ENCODE measurements at regions of chr10 and their contacts with region 1.

Region 1: DNA sequence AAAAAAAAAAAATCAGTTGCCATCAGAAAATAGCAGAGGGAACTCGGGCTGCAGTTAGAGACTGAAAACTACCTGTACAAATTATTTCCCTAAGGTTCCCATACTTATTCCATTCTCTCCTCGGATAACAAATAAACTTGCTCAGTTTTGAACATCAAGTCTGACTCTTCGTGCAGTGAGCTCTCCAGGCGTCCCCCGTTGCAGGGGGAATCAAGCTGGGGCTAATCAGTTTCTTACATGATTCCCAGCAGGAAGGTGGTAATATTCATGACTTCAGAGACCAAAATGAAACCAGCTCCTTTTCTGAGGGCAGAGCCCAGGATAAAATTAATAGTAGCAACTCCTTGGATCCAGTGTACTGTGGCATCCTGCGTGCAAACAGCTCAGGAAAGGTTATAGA is 135.3 kb downstream of the FRMD4A start:
- DNase-seq: no peak
- ATAC-seq: no peak

Region 2: GRCh38 chr10:14478604-14479003 is 283.2 kb after region 1 on chr10:
- intact Hi-C with region 1: loop called (anchors 2 to 5 kb)
- DNase-seq: peak; percentile 74
- ATAC-seq: peak; percentile 71 to 89

Region 3: GRCh38 chr10:14625192-14625631 is 429.8 kb after region 1 on chr10:
- intact Hi-C with region 1: no loop called
- DNase-seq: no peak
- ATAC-seq: no peak